ENCODE measurements at regions of chr13 and their contacts with region 1.

Region 1: GRCh38 chr13:110455941-110456340 is 105.6 kb downstream of the RAB20 start:
- DNase-seq: no peak
- ATAC-seq: peak; percentile 99
- H3K4me3 ChIP-seq: 0 out of 2 replicates have a peak overlapping the region, but pooled peaks have one; percentile 18
- H3K27ac ChIP-seq: no peak overlapping the region
- H3K4me1 ChIP-seq: peaks cover 4% of the 10 kb centered on the region; the same call in 1 of the 2 replicates
- H3K27me3 ChIP-seq: no peaks in the 10 kb centered on the region
- CTCF ChIP-seq: peak; percentile 91 to 95 (median 95); a peak in 5 of 6 replicates
- EP300 ChIP-seq: no peak
- POLR2A ChIP-seq: no peak
- RAD21 ChIP-seq: peak; percentile 95

Region 2: DNA sequence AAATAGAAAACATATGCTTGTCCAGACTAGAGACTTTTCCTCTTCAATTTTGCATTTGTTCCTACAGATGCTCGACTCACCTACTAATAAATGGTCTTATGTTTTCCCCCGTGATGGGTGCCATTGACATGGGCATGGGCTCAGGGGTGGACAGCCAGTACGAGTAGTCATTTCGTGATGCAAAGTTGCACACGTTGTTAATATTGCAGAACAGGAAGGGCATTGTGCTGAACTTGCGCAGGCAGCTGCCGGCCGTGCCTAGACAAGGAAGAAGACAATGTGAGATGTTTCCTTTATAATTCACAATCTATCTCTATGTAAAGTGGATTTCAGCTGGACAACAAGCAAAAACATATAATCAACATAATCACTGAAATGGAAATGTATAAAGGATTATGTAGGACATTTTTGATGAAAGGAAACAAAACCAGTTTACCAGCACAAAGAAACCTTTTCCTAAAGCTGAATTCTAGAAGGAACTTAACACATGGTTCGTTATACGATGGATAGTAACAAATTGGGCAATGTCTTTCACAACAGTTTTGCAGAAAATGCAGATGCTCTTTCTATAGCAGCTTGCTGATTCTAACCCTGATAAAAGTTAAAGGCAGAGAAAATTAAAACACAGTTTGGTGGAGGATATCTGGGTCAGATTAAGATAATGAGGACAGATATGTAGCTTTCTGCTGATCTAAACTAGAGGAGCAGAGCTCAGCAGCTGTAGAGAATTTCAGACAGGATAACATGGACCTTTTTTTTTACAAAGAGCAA is 294.6 kb before region 1 on chr13:
- CTCF ChIA-PET with region 1: no interaction called
- POLR2A ChIA-PET with region 1: no interaction called
- RAD21 ChIA-PET with region 1: no interaction called
- SMC1A ChIA-PET with region 1: no interaction called
- in situ Hi-C with region 1: no loop called
- intact Hi-C with region 1: no loop called
- DNase-seq: no peak
- ATAC-seq: no peak
- H3K4me3 ChIP-seq: no peak overlapping the region
- H3K27ac ChIP-seq: no peak overlapping the region
- H3K4me1 ChIP-seq: no peaks in the 10 kb centered on the region
- H3K27me3 ChIP-seq: no peaks in the 10 kb centered on the region; a peak in 2 of 4 replicates
- CTCF ChIP-seq: no peak
- EP300 ChIP-seq: no peak
- POLR2A ChIP-seq: no peak
- RAD21 ChIP-seq: no peak

Region 3: DNA sequence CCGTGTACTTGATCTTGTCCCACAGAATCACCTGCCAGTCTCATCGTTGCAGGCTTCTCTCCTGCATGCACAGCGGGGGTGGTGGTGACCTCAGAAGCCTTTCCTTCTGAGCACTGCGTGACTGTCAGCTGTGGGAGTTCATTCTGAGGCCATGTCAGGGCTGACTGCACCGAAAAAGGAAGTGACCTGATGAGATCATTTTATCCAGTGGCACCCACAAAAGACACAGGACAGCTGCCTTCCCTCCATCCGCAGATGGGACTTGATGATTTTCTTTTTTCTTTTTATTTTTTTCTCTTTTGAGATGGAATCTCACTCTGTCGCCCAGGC is 15.9 kb after region 1 on chr13:
- CTCF ChIA-PET with region 1: interaction called, 13 read pairs
- POLR2A ChIA-PET with region 1: no interaction called
- RAD21 ChIA-PET with region 1: interaction called, 12 read pairs
- SMC1A ChIA-PET with region 1: interaction called, 10 read pairs
- in situ Hi-C with region 1: no loop called
- intact Hi-C with region 1: no loop called
- DNase-seq: peak; percentile 87
- ATAC-seq: peak; percentile 96
- H3K4me3 ChIP-seq: peak overlapping the region; percentile 42; the same call in 1 of the 2 replicates
- H3K27ac ChIP-seq: peak overlapping the region; percentile 60
- H3K4me1 ChIP-seq: peaks cover 37% of the 10 kb centered on the region
- H3K27me3 ChIP-seq: no peaks in the 10 kb centered on the region
- CTCF ChIP-seq: no peak
- EP300 ChIP-seq: peak; percentile 100
- POLR2A ChIP-seq: peak; percentile 68
- RAD21 ChIP-seq: peak; percentile 3; the same call in 1 of the 2 replicates

Region 4: GRCh38 chr13:110538632-110539031 is 82.7 kb after region 1 on chr13:
- CTCF ChIA-PET with region 1: interaction called, 19 read pairs
- POLR2A ChIA-PET with region 1: no interaction called
- RAD21 ChIA-PET with region 1: interaction called, 24 read pairs
- SMC1A ChIA-PET with region 1: interaction called, 6 read pairs
- in situ Hi-C with region 1: no loop called
- intact Hi-C with region 1: no loop called
- DNase-seq: no peak
- ATAC-seq: peak; percentile 70
- H3K4me3 ChIP-seq: no peak overlapping the region
- H3K27ac ChIP-seq: no peak overlapping the region
- H3K4me1 ChIP-seq: peaks cover 13% of the 10 kb centered on the region
- H3K27me3 ChIP-seq: no peaks in the 10 kb centered on the region
- CTCF ChIP-seq: no peak
- EP300 ChIP-seq: no peak
- POLR2A ChIP-seq: no peak
- RAD21 ChIP-seq: no peak

Region 5: DNA sequence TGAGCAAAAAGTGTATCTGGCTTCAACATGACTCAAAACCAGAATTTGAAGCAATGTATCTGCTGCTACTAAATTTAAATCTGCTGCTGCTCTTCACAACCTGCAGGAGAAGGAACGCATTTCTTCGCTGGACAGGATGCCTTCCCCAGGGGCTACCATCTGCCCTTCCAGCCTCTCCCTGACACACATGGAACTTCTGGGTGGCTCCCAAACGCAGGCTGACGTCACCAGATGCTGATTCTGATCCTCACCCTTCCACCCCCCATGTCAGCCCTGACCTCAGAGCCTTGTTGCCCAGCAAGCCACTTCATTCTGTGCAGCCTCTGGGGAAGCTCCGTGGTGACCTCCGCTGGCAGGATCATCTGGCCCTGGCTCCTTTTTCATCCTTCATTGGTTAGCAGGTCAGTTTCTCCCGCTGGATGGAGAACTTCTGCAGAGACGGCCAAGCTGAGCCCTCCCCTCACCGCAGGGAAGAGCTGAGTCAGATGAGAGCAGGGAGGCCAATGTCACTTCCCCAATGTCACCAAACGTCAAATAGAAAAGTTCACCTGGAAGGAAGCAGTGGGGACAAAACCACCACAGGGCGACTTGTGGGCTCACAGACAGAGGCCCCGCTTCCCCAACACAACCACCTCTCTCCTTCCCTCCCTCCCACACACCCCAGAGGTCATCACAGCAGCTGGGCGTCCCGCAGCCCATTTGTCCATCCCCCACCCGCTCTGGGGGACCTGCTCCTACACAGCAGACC is 119.6 kb after region 1 on chr13:
- CTCF ChIA-PET with region 1: interaction called, 9 read pairs
- POLR2A ChIA-PET with region 1: interaction called, 3 read pairs
- RAD21 ChIA-PET with region 1: interaction called, 10 read pairs
- SMC1A ChIA-PET with region 1: interaction called, 7 read pairs
- in situ Hi-C with region 1: no loop called
- intact Hi-C with region 1: no loop called
- DNase-seq: peak; percentile 43
- ATAC-seq: peak; percentile 90
- H3K4me3 ChIP-seq: peak overlapping the region; percentile 69; the same call in 1 of the 2 replicates
- H3K27ac ChIP-seq: 0 out of 2 replicates have a peak overlapping the region, but pooled peaks have one; percentile 8
- H3K4me1 ChIP-seq: peaks cover 18% of the 10 kb centered on the region
- H3K27me3 ChIP-seq: no peaks in the 10 kb centered on the region; a peak in 1 of 4 replicates
- CTCF ChIP-seq: peak in 1 of 3 experiments; percentile 16; a peak in 2 of 6 replicates
- EP300 ChIP-seq: no peak
- POLR2A ChIP-seq: no peak; the same call in 1 of the 2 replicates
- RAD21 ChIP-seq: no peak

Region 6: GRCh38 chr13:110615322-110616102 is 159.6 kb after region 1 on chr13 and contains the start of gene NAXD:
- CTCF ChIA-PET with region 1: interaction called, 10 read pairs
- POLR2A ChIA-PET with region 1: no interaction called
- RAD21 ChIA-PET with region 1: interaction called, 10 read pairs
- SMC1A ChIA-PET with region 1: interaction called, 8 read pairs
- in situ Hi-C with region 1: no loop called
- intact Hi-C with region 1: no loop called
- DNase-seq: peak; percentile 62
- ATAC-seq: peak; percentile 87
- H3K4me3 ChIP-seq: peak within 1 kb of the TSS; percentile 63
- H3K27ac ChIP-seq: peak within 1 kb of the TSS; percentile 86
- H3K4me1 ChIP-seq: peaks cover 20% of the 10 kb centered on the region
- H3K27me3 ChIP-seq: no peaks in the 10 kb centered on the region
- CTCF ChIP-seq: no peak
- EP300 ChIP-seq: no peak
- POLR2A ChIP-seq: peak; percentile 83
- RAD21 ChIP-seq: no peak
- polyA plus RNA-seq, gene NAXD: 1.5 to 5.0 TPM

Region 7: DNA sequence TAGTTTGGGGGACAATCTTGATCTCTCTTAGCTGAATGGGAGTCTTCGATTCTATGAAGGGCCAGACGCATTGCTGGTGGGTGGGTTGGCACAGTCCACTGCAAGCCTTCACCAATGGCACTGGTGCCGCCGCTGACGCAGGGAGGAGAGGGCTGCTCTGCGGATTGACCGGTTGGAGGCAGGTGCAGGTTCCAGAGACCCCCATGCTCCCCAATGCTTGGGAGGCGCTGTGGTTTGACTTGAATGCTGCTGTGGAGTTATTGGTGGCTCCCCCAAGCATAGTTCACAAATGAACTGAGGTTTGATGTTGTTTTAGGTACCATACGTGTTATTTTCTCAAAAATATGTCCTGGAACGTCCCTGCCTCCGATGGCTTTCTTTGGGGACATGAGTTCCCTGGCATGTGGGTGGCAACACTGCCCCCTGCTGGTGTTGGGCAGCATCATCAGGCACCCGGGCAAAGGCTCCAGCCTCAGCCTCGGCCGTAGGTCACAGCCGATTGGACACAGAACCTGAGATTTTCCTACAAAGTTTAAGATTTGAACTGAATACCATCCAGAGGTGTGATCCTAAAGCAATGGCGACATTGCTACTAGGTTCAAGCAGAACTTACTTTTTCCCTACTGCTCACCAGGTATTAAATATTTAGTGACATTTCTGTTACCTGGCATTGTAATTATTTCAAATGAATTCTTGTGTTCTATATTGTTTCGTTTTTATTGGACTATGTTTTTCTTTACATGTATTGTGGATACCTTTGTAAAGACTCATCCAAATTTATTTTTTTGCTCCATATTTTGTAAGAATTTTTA is 363.5 kb after region 1 on chr13:
- CTCF ChIA-PET with region 1: interaction called, 38 read pairs
- POLR2A ChIA-PET with region 1: no interaction called
- RAD21 ChIA-PET with region 1: interaction called, 10 read pairs
- SMC1A ChIA-PET with region 1: interaction called, 19 read pairs
- in situ Hi-C with region 1: no loop called
- intact Hi-C with region 1: loop called (anchors 1 kb)
- DNase-seq: peak; percentile 39
- ATAC-seq: peak; percentile 96
- H3K4me3 ChIP-seq: no peak overlapping the region
- H3K27ac ChIP-seq: no peak overlapping the region
- H3K4me1 ChIP-seq: 0 out of 2 replicates have a peak, but pooled peaks cover 5% of the 10 kb centered on the region
- H3K27me3 ChIP-seq: no peaks in the 10 kb centered on the region
- CTCF ChIP-seq: peak; percentile 96 to 97 (median 97)
- EP300 ChIP-seq: no peak
- POLR2A ChIP-seq: no peak
- RAD21 ChIP-seq: peak; percentile 90